ENCODE measurements at regions of chr1 and their contacts with region 1.

Region 1: DNA sequence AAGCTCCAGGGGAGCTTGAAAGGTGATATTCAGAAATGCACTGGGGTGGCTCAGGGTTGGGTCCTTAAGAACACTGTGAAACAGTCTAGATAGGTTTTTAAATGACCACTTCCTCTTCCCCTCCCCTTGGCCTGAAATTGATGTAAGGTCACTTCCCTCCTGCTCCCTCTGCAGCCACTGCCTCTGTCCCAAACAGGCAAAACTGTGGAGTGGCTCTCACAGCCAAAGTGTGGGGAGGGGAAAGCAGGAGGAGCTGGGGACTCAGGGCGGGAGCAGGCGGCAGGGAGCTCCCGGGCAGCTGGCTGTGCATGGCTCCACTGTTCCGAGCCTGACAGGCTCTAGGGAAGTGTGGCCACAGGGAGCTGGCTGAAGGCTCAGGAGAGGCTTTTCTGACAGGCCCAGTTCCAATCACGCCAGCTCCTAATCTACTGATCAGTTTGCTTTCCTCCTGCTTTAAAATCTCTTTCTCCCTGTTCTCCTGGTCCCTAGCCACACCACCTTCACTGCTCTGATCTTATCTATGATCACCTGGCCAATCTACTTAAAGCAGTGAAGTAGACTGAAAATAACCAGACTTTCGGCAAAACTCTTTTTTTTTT is 5.1 kb upstream of the CSRP1 start:
- DNase-seq: peak; percentile 35 to 59
- ATAC-seq: peak; percentile 18

Region 2: DNA sequence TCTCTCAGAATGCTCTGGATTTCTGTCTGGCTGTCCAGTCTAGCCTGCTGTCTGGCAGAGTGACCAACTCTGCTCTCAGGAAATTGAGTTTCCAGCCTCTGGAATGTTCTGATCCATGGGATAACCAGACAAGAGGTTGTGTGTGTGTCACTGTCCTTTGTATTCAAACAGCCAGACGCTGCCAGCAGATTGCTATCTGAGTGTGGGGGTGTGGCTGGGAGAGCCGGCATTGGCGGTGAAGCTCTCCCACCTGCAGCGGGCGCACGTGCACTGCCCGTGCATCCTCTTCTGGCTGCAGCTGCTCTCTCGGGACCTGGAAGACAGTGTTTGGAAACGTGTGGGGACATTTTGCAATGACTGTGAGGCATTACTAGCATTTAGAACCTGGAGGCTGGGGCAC is 202.6 kb before region 1 on chr1:
- intact Hi-C with region 1: no loop called
- DNase-seq: peak; percentile 83 to 86
- ATAC-seq: peak; percentile 87

Region 3: DNA sequence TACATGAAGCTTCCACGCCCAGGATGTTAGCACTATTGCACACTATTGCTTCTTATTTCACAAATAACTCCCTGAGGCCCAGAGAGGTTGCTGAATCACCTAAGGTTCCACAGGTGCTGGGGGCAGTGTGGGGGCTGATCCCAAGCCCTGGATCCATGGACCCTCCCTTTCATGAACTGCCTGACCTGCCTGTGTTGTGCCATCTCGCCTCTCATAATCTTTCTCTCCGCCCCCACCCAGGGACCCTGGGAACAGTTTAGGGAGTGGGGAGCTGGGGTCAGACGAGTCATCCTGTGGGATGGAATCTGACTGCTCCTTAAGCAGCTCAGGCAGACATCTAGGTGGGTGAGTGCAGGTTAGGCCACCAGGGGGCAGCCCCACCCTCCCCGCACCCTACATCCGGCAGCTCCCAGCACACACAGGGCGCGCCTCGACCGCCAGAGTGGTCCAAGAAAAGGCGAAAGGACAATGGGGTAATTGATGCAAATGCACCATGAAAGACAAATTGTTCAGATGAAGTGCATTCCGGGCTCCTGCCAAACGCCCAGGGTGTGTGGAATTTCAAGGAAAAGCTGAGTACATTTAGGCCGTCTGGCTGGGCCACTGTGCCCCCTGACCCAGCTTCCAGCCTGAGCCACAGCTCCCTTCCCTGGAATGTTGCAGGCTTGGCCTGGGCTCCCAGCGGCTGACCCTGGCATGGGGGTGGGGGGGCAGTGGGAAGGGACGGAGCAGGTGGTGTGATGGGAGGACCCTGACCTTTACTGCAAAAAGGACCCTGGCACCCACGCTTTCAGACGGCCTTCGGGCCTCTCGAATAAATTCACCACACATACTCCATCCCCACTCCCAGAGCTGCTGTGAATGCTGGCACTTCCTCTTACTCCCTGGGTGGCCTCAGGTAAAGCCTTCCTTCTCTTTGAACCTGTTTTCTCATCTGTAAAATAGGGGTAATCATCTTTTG is 63.8 kb before region 1 on chr1:
- intact Hi-C with region 1: loop called in 1 of 2 experiments (anchors 10 kb)
- DNase-seq: peak; percentile 64 to 84
- ATAC-seq: peak; percentile 98

Region 4: GRCh38 chr1:201828820-201829774 is 317.1 kb after region 1 on chr1 and contains the start of gene IPO9:
- intact Hi-C with region 1: no loop called
- DNase-seq: peak; percentile 89 to 98
- ATAC-seq: peak; percentile 98
- total RNA-seq, gene IPO9: 22.0 to 24.3 TPM

Measured in left colon (tissue), 2 donors.